CD4-positive, alpha-beta memory T cell (primary cell): ENCODE measurements at regions of chr14 and their contacts with region 1.

Region 1: DNA sequence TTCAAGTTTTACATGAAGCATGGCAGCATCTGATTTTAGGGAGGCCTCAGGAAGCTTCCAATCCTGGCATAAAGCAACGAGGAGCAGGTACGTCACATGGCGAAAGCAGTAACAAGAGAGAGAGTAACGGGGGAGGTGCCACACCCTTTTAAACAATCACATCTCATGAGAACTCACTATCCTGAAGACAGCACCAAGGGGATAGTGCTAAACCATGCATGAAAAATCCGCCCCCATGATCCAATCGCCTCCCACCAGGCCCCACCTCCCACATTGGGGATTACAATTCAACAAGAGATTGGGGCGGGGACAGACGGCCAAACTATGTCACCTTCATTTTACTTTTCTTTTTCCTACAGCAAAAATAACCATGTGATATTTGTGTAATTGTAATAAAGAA is 7.2 kb upstream of the MAP3K9 start:
- DNase-seq: no peak
- H3K4me3 ChIP-seq: no peak overlapping the region
- H3K4me3 Mint-ChIP-seq: no peak overlapping the region
- H3K27ac ChIP-seq: no peak overlapping the region
- H3K27ac Mint-ChIP-seq: peak overlapping the region in 2 of 7 donors; percentile 23 to 78
- H3K4me1 ChIP-seq: peaks cover 11% of the 10 kb centered on the region
- H3K4me1 Mint-ChIP-seq: peaks cover 4 to 10% (median 6%) of the 10 kb centered on the region in 4 donors
- H3K27me3 ChIP-seq: no peaks in the 10 kb centered on the region
- H3K27me3 Mint-ChIP-seq: no peaks in the 10 kb centered on the region

Region 2: GRCh38 chr14:70803321-70804310 is 12.9 kb before region 1 on chr14:
- CTCF ChIA-PET with region 1: interaction called, 20 read pairs
- POLR2A ChIA-PET with region 1: interaction called, 15 read pairs
- intact Hi-C with region 1: no loop called
- DNase-seq: no peak
- H3K4me3 ChIP-seq: no peak overlapping the region
- H3K4me3 Mint-ChIP-seq: no peak overlapping the region
- H3K27ac ChIP-seq: no peak overlapping the region
- H3K27ac Mint-ChIP-seq: no peak overlapping the region
- H3K4me1 ChIP-seq: peaks cover 9% of the 10 kb centered on the region
- H3K4me1 Mint-ChIP-seq: peaks cover 3 to 14% (median 10%) of the 10 kb centered on the region in 4 donors
- H3K27me3 ChIP-seq: no peaks in the 10 kb centered on the region
- H3K27me3 Mint-ChIP-seq: no peaks in the 10 kb centered on the region

Region 3: GRCh38 chr14:70827396-70828151 is 11.0 kb after region 1 on chr14:
- CTCF ChIA-PET with region 1: interaction called, 26 read pairs
- POLR2A ChIA-PET with region 1: no interaction called
- intact Hi-C with region 1: no loop called
- DNase-seq: no peak
- H3K4me3 ChIP-seq: no peak overlapping the region
- H3K4me3 Mint-ChIP-seq: no peak overlapping the region
- H3K27ac ChIP-seq: no peak overlapping the region
- H3K27ac Mint-ChIP-seq: no peak overlapping the region
- H3K4me1 ChIP-seq: peaks cover 5% of the 10 kb centered on the region
- H3K4me1 Mint-ChIP-seq: peaks cover 5 to 15% (median 8%) of the 10 kb centered on the region in 4 donors
- H3K27me3 ChIP-seq: no peaks in the 10 kb centered on the region
- H3K27me3 Mint-ChIP-seq: no peaks in the 10 kb centered on the region

Region 4: GRCh38 chr14:70873627-70874026 is 57.1 kb after region 1 on chr14:
- CTCF ChIA-PET with region 1: interaction called, 16 read pairs
- POLR2A ChIA-PET with region 1: interaction called, 5 read pairs
- intact Hi-C with region 1: loop called (anchors 5 kb)
- DNase-seq: peak; percentile 31 to 43 (median 35)
- H3K4me3 ChIP-seq: no peak overlapping the region
- H3K4me3 Mint-ChIP-seq: peak overlapping the region in 5 of 8 donors; percentile 42 to 69 (median 61)
- H3K27ac ChIP-seq: no peak overlapping the region
- H3K27ac Mint-ChIP-seq: peak overlapping the region; percentile 68 to 90 (median 86)
- H3K4me1 ChIP-seq: peaks cover 23% of the 10 kb centered on the region
- H3K4me1 Mint-ChIP-seq: peaks cover 10 to 26% (median 21%) of the 10 kb centered on the region in 4 donors
- H3K27me3 ChIP-seq: no peaks in the 10 kb centered on the region
- H3K27me3 Mint-ChIP-seq: no peaks in the 10 kb centered on the region

Region 5: DNA sequence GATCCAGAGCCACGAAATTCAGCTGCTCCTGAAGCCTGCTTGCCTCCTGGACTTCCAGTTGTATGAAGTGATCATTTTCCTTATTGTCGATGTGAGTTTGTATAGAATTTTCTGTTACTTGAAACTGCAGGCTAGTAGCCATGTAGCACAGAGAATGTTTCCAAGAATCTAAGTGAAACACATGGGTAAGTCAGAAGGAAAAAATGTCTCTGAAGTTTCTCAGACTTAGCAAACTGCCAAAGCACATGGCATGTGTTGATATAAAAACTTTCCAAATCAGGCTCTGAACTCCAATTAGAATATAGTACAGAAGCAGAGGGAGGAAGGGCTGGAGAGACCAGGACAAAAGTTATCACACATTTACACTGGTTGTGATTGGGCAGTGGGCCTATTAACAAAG is 80.9 kb after region 1 on chr14:
- CTCF ChIA-PET with region 1: interaction called, 15 read pairs
- POLR2A ChIA-PET with region 1: no interaction called
- intact Hi-C with region 1: no loop called
- DNase-seq: no peak
- H3K4me3 ChIP-seq: no peak overlapping the region
- H3K4me3 Mint-ChIP-seq: no peak overlapping the region
- H3K27ac ChIP-seq: no peak overlapping the region
- H3K27ac Mint-ChIP-seq: no peak overlapping the region
- H3K4me1 ChIP-seq: peaks cover 35% of the 10 kb centered on the region
- H3K4me1 Mint-ChIP-seq: peaks cover 38 to 43% (median 40%) of the 10 kb centered on the region in 4 donors
- H3K27me3 ChIP-seq: no peaks in the 10 kb centered on the region
- H3K27me3 Mint-ChIP-seq: no peaks in the 10 kb centered on the region

Region 6: DNA sequence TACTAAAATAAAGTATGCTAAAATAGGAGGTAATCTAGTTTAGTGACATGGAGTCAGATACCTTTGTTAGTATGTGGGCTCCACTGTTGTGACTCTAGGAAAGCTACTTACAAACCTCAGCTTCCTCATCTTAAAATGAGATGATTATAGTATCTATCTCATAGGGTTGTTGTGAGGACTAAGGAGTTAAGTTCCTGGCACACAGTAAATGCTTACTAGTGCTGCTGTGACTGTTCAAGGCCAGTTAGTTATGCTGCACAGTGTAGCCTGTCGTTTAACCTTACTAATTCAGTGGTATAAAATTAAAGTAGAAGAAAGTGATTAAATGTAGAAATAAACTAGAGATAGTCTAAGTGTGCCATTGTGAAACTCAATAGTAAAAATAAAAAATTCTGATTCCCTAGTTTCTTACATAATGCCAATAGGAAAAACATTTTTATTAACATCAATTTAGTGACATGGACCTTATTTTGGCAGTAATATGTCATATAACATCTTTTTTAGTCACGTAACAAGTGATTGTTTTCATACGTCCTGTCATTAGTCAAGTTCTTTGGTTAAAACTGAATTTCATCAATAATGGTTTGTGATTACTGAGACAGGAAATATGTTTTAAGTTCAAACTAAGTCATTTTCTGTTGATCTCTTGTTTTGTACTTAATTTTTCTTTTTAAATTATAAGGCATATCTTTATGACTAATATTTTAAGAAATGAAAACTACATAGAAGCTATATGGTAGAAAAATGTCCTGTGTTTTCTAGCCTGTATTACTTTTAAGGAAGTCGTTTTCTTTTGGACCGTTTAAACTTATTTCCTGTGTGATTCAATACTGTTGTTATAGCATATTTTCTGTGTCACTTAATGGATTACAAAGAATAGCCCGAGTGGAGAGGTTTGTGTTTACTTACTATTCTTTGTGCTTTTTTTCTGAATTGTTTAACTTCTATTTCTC is 164.8 kb after region 1 on chr14:
- CTCF ChIA-PET with region 1: interaction called, 56 read pairs
- POLR2A ChIA-PET with region 1: no interaction called
- intact Hi-C with region 1: no loop called
- DNase-seq: peak in 1 of 5 donors; percentile 20
- H3K4me3 ChIP-seq: no peak overlapping the region
- H3K4me3 Mint-ChIP-seq: peak overlapping the region; percentile 59 to 90 (median 74)
- H3K27ac ChIP-seq: peak overlapping the region; percentile 47
- H3K27ac Mint-ChIP-seq: peak overlapping the region; percentile 53 to 90 (median 81)
- H3K4me1 ChIP-seq: peaks cover 62% of the 10 kb centered on the region
- H3K4me1 Mint-ChIP-seq: peaks cover 49 to 77% (median 59%) of the 10 kb centered on the region in 4 donors
- H3K27me3 ChIP-seq: no peaks in the 10 kb centered on the region
- H3K27me3 Mint-ChIP-seq: no peaks in the 10 kb centered on the region

Region 7: GRCh38 chr14:71011479-71011878 is 195.0 kb after region 1 on chr14:
- CTCF ChIA-PET with region 1: interaction called, 20 read pairs
- POLR2A ChIA-PET with region 1: interaction called, 3 read pairs
- intact Hi-C with region 1: no loop called
- DNase-seq: peak in 4 of 5 donors; percentile 9 to 25 (median 22)
- H3K4me3 ChIP-seq: no peak overlapping the region
- H3K4me3 Mint-ChIP-seq: peak overlapping the region in 3 of 8 donors; percentile 15 to 55 (median 36)
- H3K27ac ChIP-seq: no peak overlapping the region
- H3K27ac Mint-ChIP-seq: peak overlapping the region in 6 of 7 donors; percentile 38 to 81 (median 70)
- H3K4me1 ChIP-seq: peaks cover 31% of the 10 kb centered on the region
- H3K4me1 Mint-ChIP-seq: peaks cover 35 to 69% (median 49%) of the 10 kb centered on the region in 4 donors
- H3K27me3 ChIP-seq: no peaks in the 10 kb centered on the region
- H3K27me3 Mint-ChIP-seq: no peaks in the 10 kb centered on the region